Right ventricle myocardium superior (tissue), 1 donor: ENCODE measurements at regions of chr2 and their contacts with region 1.

Region 1: DNA sequence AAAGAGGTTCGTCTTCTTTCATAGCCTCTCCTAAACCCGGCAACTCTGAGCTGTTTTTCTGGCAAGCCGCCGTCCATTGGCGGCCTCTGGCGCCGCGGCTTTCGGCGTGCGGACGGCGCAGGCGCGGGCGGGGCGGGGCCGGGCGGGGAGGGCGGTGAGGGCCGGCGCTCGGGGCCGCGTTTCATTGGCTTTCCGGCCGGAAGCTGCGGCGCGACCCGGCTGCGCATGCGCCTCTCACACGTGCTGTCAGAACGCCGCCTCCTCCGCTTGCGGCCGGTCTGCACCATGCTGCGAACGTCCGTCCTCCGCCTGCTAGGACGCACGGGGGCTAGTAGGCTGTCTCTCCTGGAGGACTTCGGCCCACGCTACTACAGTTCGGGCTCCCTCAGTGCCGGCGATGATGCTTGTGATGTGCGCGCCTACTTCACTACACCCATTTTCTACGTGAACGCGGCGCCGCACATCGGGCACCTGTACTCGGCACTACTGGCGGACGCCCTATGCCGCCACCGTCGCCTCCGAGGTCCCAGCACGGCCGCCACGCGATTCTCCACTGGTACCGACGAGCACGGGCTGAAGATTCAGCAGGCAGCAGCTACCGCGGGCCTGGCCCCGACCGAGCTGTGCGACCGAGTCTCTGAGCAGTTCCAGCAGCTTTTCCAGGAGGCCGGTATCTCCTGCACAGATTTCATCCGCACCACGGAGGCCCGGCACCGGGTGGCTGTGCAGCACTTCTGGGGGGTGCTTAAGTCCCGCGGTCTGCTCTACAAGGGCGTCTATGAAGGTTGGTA is at the start of gene MARS2:
- DNase-seq: peak; percentile 97
- ATAC-seq: peak; percentile 98
- total RNA-seq, gene MARS2: 6.6 TPM

Region 2: GRCh38 chr2:197113275-197113711 is 592.0 kb before region 1 on chr2:
- intact Hi-C with region 1: no loop called
- DNase-seq: no peak
- ATAC-seq: no peak

Region 3: GRCh38 chr2:197332641-197333040 is 372.7 kb before region 1 on chr2:
- intact Hi-C with region 1: no loop called
- DNase-seq: no peak
- ATAC-seq: no peak

Region 4: GRCh38 chr2:197499594-197500526 is 205.5 kb before region 1 on chr2 and contains the starts of genes HSPD1 and HSPE1:
- intact Hi-C with region 1: loop called (anchors 10 kb)
- DNase-seq: peak; percentile 97
- ATAC-seq: peak; percentile 96
- total RNA-seq, gene HSPD1: 131 TPM
- total RNA-seq, gene HSPE1: 107 TPM

Region 5: GRCh38 chr2:197571627-197572271 is 133.6 kb before region 1 on chr2:
- intact Hi-C with region 1: no loop called
- DNase-seq: no peak
- ATAC-seq: peak; percentile 45

Region 6: DNA sequence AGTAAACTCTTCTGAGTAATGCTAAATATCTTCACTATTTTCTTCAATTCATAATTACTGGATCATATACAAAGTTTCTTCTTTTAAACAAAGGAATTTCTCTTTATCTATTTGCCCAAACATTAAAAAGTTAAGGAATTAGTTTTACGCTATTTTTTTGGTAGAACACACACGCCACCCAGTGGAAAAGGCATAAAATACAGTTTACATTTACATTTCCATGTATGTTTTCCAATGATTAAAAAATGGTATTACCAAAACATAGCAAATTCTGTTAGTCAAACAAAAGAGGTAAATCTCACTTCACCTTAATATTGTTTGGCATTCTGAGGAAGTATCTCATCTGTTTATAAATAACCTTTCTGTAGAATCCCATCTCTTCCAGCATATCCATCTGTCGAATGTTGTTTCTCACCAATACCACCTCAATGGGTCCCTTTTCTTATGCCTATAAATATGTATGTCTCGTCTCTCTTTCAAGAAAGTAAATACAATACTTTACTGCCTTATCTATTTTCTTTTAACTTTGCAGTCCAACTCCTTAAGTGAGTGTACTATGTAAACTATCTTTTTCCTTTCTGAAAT is 72.6 kb after region 1 on chr2:
- intact Hi-C with region 1: loop called (anchors 10 kb)
- DNase-seq: no peak
- ATAC-seq: no peak

Region 7: GRCh38 chr2:198296665-198297308 is 591.5 kb after region 1 on chr2:
- intact Hi-C with region 1: loop called (anchors 5 kb)
- DNase-seq: no peak
- ATAC-seq: peak; percentile 89